AG04450 (cell line): ENCODE measurements at regions of chr11 and their contacts with region 1.

Region 1: GRCh38 chr11:4072668-4073285 is 21.8 kb upstream of the RRM1 start:
- DNase-seq: peak; percentile 52
- H3K4me3 ChIP-seq: no peak overlapping the region
- H3K27ac ChIP-seq: no peak overlapping the region
- H3K27me3 ChIP-seq: no peaks in the 10 kb centered on the region
- CTCF ChIP-seq: peak; percentile 91

Region 2: DNA sequence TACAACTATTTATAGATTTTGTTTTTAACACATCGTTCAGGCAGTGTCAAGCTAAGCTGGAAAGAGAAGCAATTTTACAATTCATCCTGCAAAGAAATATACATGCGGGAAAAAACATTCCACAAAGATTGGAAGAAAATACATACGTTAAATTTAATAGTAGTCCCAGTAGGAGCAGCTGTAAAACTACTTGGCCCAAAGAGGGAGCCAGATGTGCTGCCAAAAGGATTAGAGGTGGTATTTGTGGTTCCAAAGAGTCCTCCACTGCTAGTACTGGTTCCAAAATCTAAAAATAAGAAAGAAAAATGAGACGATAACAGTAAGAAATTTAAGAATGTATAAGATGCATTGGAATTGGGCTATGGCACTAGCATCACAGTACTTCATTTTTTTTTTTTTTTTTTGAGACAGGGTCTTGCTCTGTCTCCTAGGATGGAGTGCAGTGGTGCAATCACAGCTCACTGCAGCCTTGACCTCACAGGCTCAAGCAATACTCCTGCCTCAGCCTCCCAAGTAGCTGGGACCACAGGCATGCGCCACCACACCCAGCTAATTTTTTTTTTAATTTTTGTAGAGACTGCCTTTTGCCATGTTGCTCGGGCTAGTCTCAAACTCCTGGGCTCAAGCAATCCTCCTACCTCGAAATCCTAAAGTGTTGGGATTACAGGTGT is 296.9 kb before region 1 on chr11:
- CTCF ChIA-PET with region 1: interaction called, 10 read pairs
- POLR2A ChIA-PET with region 1: no interaction called
- DNase-seq: no peak
- H3K4me3 ChIP-seq: no peak overlapping the region
- H3K27ac ChIP-seq: no peak overlapping the region
- H3K27me3 ChIP-seq: no peaks in the 10 kb centered on the region
- CTCF ChIP-seq: 0 out of 2 replicates have a peak, but pooled peaks have one; percentile 11

Region 3: GRCh38 chr11:3849297-3849874 is 223.4 kb before region 1 on chr11:
- CTCF ChIA-PET with region 1: interaction called, 1,559 read pairs
- POLR2A ChIA-PET with region 1: interaction called, 10 read pairs
- DNase-seq: no peak
- H3K4me3 ChIP-seq: no peak overlapping the region
- H3K27ac ChIP-seq: no peak overlapping the region
- H3K27me3 ChIP-seq: peaks cover 4% of the 10 kb centered on the region
- CTCF ChIP-seq: peak; percentile 80

Region 4: DNA sequence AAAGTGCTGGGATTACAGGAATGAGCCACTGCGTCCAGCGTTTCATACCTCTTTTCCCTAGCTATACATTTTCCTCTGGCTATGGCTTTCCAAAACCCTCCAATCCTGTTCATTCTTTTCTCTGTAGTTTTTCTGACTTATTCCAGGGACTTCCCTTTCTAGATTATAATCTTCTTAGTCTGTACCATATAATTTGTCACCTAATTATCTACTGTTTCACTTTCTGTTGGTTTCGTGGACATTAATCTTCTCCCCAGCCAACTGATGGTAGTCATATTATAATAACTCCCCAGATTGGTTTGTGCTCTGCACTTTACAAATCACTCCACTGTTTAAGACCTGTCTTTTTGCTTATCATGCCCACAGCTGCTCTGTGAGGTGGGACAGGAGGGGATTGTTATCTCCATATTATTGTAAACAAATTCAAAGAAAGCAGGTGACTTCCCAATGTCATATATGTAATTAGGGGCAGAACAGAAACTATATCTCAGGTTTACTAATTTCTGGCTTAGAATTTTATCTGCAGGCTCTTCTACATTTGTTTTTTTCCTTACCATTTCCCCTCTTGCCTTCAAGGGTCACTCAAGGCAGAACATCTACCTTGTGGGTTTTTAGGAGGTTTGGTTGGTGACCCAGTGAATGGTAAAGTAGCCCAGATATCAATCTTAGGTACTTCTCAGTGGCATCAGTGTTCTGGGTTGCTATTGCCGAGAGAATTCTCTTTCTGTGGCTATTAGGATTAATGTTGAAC is 193.4 kb before region 1 on chr11:
- CTCF ChIA-PET with region 1: interaction called, 15 read pairs
- POLR2A ChIA-PET with region 1: no interaction called
- DNase-seq: no peak
- H3K4me3 ChIP-seq: no peak overlapping the region
- H3K27ac ChIP-seq: no peak overlapping the region
- H3K27me3 ChIP-seq: no peaks in the 10 kb centered on the region
- CTCF ChIP-seq: no peak

Region 5: GRCh38 chr11:3984896-3985295 is 87.9 kb before region 1 on chr11:
- CTCF ChIA-PET with region 1: interaction called, 19 read pairs
- POLR2A ChIA-PET with region 1: no interaction called
- DNase-seq: no peak
- H3K4me3 ChIP-seq: no peak overlapping the region
- H3K27ac ChIP-seq: no peak overlapping the region
- H3K27me3 ChIP-seq: no peaks in the 10 kb centered on the region
- CTCF ChIP-seq: no peak

Region 6: DNA sequence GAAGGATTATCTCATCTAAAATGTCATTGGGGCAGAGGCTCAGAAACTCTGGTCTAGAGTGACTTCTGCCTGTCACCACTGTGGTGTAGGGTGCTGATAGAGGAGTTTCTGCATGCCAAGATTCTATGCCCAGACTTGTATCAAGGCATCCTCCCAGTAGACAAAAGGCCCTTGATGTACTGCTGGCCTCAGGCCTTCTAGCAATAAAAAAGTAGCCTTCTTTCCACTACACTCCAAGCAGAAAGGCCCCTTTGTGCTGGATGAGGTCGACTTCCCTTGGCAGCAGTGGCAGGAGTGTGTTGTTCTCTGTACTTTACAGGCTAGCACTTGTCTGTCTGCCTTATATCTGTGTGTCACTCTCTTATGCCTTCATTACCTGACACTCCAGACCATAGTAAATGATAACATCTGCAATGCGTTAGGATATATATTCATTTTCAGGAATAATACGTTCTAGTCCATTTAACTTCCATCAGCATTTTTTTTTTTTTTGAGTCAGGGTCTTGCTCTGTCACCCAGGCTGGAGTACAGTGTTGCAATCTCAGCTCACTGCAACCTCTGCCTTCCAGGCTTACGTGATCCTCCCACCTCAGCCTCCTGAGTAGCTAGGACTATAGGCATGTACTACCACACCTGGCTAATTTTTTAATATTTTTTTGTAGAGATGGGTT is 27.7 kb before region 1 on chr11:
- CTCF ChIA-PET with region 1: interaction called, 38 read pairs
- POLR2A ChIA-PET with region 1: no interaction called
- DNase-seq: no peak
- H3K4me3 ChIP-seq: no peak overlapping the region
- H3K27ac ChIP-seq: no peak overlapping the region
- H3K27me3 ChIP-seq: no peaks in the 10 kb centered on the region
- CTCF ChIP-seq: no peak

Region 7: GRCh38 chr11:4115128-4115527 is 42.4 kb after region 1 on chr11:
- CTCF ChIA-PET with region 1: no interaction called
- POLR2A ChIA-PET with region 1: no interaction called
- DNase-seq: no peak
- H3K4me3 ChIP-seq: no peak overlapping the region
- H3K27ac ChIP-seq: no peak overlapping the region
- H3K27me3 ChIP-seq: no peaks in the 10 kb centered on the region
- CTCF ChIP-seq: no peak

Region 8: GRCh38 chr11:4480574-4481566 is 408.1 kb after region 1 on chr11:
- CTCF ChIA-PET with region 1: no interaction called
- POLR2A ChIA-PET with region 1: no interaction called
- DNase-seq: no peak
- H3K4me3 ChIP-seq: no peak overlapping the region
- H3K27ac ChIP-seq: no peak overlapping the region
- H3K27me3 ChIP-seq: no peaks in the 10 kb centered on the region
- CTCF ChIP-seq: no peak

Region 9: GRCh38 chr11:4496557-4497275 is 423.9 kb after region 1 on chr11:
- CTCF ChIA-PET with region 1: no interaction called
- POLR2A ChIA-PET with region 1: no interaction called
- DNase-seq: no peak
- H3K4me3 ChIP-seq: no peak overlapping the region
- H3K27ac ChIP-seq: no peak overlapping the region
- H3K27me3 ChIP-seq: peaks cover 24% of the 10 kb centered on the region
- CTCF ChIP-seq: no peak